GM12878 (cell line): ENCODE measurements at regions of chr14 and their contacts with region 1.

Region 1: DNA sequence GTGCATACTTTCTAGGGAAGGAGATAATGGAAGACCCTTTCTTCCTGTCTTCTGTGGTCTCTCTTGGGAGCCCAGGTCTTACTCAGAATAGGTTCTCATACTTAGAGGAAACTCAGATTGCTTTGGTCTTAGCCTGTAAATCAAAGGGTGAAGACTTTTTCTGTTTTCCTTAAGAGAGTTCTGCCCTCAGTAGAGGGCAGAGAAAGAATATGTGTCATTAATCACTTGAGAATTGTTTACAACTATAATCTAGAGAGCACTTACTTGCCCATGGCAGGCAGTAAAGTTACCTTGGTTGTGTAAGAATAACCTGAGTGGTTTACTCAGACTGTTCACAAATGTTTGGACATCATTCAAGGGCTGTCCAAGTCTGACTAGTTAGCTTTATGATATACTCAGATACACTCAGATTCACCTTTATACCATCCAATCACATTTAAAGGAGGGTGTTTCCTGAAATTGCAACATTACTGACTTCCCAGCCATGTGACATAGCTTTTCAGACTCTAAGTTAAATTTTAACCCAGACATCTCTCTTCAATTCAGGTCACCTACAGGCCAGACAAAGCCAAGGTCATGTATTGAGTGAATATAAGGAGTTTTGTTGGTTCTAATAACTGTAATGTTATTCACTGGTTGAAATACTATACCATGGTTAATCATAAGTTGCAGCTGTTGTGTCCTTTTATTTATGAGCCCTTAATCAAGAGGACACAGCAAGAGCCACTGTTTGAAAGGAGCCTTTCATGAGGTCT is 372.2 kb downstream of the RAD51B start:
- DNase-seq: no peak
- ATAC-seq: peak; percentile 48
- H3K4me3 ChIP-seq: no peak overlapping the region
- H3K27ac ChIP-seq: no peak overlapping the region
- H3K4me1 ChIP-seq: no peaks in the 10 kb centered on the region
- H3K27me3 ChIP-seq: no peaks in the 10 kb centered on the region
- CTCF ChIP-seq: no peak
- EP300 ChIP-seq: no peak
- POLR2A ChIP-seq: no peak
- RAD21 ChIP-seq: no peak

Region 2: DNA sequence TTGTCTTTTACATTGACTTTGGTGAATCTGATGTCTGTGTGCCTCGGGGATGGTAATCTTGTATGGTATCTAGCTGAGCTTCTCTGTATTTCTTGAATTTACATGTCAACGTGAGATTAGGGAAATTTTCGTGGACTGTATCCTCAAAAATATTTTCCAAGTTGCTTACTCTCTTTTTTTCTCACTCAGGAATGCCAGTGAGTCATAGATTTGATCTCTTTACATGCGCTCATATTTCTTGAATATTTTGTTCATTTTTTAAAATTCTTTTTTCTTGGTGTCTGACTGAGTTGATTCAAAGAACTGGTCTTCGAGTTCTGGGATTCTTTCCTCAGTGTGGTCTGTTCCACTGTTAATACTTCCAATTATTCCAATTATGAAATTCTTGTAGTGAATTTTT is 164.5 kb before region 1 on chr14:
- CTCF ChIA-PET with region 1: no interaction called
- POLR2A ChIA-PET with region 1: no interaction called
- RAD21 ChIA-PET with region 1: no interaction called
- SMC1A ChIA-PET with region 1: no interaction called
- in situ Hi-C with region 1: no loop called
- intact Hi-C with region 1: no loop called
- DNase-seq: no peak
- ATAC-seq: no peak
- H3K4me3 ChIP-seq: no peak overlapping the region
- H3K27ac ChIP-seq: no peak overlapping the region
- H3K4me1 ChIP-seq: no peaks in the 10 kb centered on the region
- H3K27me3 ChIP-seq: no peaks in the 10 kb centered on the region
- CTCF ChIP-seq: no peak
- EP300 ChIP-seq: no peak
- POLR2A ChIP-seq: no peak
- RAD21 ChIP-seq: no peak

Region 3: GRCh38 chr14:68203871-68204270 is 12.1 kb after region 1 on chr14:
- CTCF ChIA-PET with region 1: interaction called, 6 read pairs
- POLR2A ChIA-PET with region 1: interaction called, 3 read pairs
- RAD21 ChIA-PET with region 1: no interaction called
- SMC1A ChIA-PET with region 1: interaction called, 20 read pairs
- in situ Hi-C with region 1: no loop called
- intact Hi-C with region 1: no loop called
- DNase-seq: no peak
- ATAC-seq: no peak
- H3K4me3 ChIP-seq: no peak overlapping the region
- H3K27ac ChIP-seq: no peak overlapping the region
- H3K4me1 ChIP-seq: peaks cover 6% of the 10 kb centered on the region
- H3K27me3 ChIP-seq: no peaks in the 10 kb centered on the region
- CTCF ChIP-seq: no peak
- EP300 ChIP-seq: no peak
- POLR2A ChIP-seq: no peak
- RAD21 ChIP-seq: no peak

Region 4: DNA sequence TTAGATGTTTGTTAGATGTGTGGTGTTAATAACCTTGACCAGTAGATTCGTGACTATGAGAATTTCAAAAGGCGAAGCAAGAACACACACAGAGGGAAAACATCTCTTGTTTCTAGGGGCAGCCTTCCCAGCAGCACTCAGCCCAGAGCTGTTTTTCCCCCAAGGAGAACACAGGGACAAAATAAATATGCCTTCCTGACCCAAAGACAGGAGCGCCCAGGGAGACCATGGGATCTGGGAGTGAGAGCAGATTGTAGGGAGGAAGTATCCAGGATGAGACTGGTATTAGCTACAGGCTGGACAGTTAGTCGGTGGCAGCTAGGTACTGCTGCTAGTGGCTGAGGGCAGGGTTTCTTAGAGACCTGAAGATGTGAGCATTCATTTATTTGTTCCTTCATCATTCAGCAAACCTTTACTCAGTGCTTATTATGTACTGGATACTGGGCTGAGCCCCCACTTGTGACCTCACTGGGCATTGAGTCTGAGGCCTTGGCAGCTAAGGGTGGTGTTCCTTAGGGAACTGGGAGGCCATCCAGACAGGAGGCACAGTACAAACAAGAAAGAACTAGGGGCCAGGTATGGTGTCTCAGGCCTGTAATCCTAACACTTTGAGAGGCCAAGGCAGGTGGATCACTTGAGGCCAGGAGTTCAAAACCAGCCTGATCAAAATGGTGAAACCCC is 131.3 kb after region 1 on chr14:
- CTCF ChIA-PET with region 1: no interaction called
- POLR2A ChIA-PET with region 1: no interaction called
- RAD21 ChIA-PET with region 1: no interaction called
- SMC1A ChIA-PET with region 1: no interaction called
- in situ Hi-C with region 1: no loop called
- intact Hi-C with region 1: no loop called
- DNase-seq: no peak
- ATAC-seq: no peak
- H3K4me3 ChIP-seq: no peak overlapping the region
- H3K27ac ChIP-seq: no peak overlapping the region
- H3K4me1 ChIP-seq: peaks cover 37% of the 10 kb centered on the region
- H3K27me3 ChIP-seq: no peaks in the 10 kb centered on the region
- CTCF ChIP-seq: no peak
- EP300 ChIP-seq: no peak
- POLR2A ChIP-seq: no peak
- RAD21 ChIP-seq: no peak